Gastrocnemius medialis (tissue), 4 donors: ENCODE measurements at regions of chr15 and their contacts with region 1.

Region 1: GRCh38 chr15:92803847-92804609 is 96.1 kb upstream of the CHD2 start:
- DNase-seq: peak; percentile 80 to 89
- ATAC-seq: peak; percentile 86 to 89
- H3K4me3 ChIP-seq: no peak overlapping the region
- H3K27ac ChIP-seq: peak overlapping the region; percentile 97 to 99 (median 98)
- H3K4me1 ChIP-seq: peaks cover 40 to 45% of the 10 kb centered on the region in 2 donors
- H3K27me3 ChIP-seq: no peaks in the 10 kb centered on the region
- CTCF ChIP-seq: peak in 1 of 5 experiments; percentile 11
- POLR2A ChIP-seq: peak; percentile 37 to 66

Region 2: GRCh38 chr15:92917606-92918407 is 113.8 kb after region 1 on chr15:
- in situ Hi-C with region 1: loop called in 3 of 4 experiments (anchors 5 kb)
- intact Hi-C with region 1: loop called (anchors 1 kb)
- DNase-seq: peak; percentile 87 to 94
- ATAC-seq: peak; percentile 57 to 64
- H3K4me3 ChIP-seq: peak overlapping the region; percentile 3 to 21 (median 12)
- H3K27ac ChIP-seq: peak overlapping the region; percentile 91 to 97 (median 96)
- H3K4me1 ChIP-seq: peaks cover 86 to 91% of the 10 kb centered on the region in 2 donors
- H3K27me3 ChIP-seq: no peaks in the 10 kb centered on the region
- CTCF ChIP-seq: peak; percentile 88 to 98 (median 95)
- POLR2A ChIP-seq: no peak

Region 3: DNA sequence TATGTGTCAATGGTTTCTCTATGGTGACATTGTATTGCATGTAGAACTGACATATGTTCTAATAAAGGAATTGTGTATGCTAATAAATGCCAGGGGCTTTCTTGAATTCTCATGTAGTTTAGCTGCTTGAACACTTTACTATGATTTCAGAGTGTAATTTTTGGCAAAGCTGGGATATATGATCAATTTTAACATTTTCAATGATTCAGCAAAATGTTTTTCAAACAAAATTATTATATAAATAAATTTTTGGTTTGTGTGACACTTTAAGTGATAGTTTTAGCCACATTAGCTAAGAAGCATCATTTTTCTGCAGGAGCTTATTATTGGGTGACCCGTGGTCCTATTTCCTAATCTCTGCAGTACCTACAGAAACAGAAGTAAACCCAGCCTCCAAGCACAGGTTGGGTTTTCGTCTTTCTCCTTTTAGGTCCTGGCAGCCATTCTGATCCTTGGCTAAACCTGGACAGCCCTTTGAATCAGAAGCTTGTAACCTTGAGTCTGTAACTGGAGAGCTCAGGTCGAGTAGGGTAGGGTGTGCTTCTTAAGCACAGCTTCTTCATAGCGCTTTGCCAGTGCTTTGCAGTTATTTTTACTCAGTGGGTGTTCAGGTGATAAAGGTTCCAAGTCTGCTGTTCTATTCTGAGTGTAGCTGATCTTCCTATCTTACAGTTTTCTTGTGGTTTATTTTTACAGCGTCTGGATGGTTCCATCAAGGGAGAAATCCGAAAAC is 170.3 kb after region 1 on chr15:
- in situ Hi-C with region 1: no loop called
- intact Hi-C with region 1: loop called (anchors 1 kb)
- DNase-seq: peak; percentile 83 to 87
- ATAC-seq: peak; percentile 90 to 93
- H3K4me3 ChIP-seq: peak overlapping the region; percentile 33 to 44 (median 36)
- H3K27ac ChIP-seq: peak overlapping the region; percentile 78 to 92 (median 90)
- H3K4me1 ChIP-seq: peaks cover 47 to 61% of the 10 kb centered on the region in 2 donors
- H3K27me3 ChIP-seq: no peaks in the 10 kb centered on the region
- CTCF ChIP-seq: no peak
- POLR2A ChIP-seq: peak in 1 of 2 donors; percentile 44

Region 4: DNA sequence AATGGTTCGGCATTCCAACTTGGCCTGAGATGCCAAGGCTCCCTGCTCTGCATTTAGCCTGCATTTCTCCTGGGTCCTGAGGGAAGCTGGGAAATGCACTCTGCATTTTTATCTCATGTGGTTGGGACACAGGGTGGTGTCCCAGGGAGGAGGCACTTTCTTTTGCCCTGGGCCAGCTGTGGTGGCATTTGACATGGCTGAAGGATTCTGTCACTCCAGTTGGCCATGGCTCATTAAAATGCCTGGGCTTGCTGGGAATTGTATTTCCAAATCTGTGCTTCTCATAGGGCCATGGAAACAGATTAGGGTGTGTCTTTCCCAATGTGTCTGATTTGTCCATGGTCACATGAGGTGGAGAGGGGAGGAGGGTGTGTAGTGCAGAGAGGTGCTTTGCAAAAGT is 413.3 kb after region 1 on chr15:
- in situ Hi-C with region 1: no loop called
- intact Hi-C with region 1: loop called (anchors 5 kb)
- DNase-seq: peak; percentile 76 to 89
- ATAC-seq: peak; percentile 70 to 85
- H3K4me3 ChIP-seq: no peak overlapping the region
- H3K27ac ChIP-seq: peak overlapping the region; percentile 85 to 90 (median 87)
- H3K4me1 ChIP-seq: peaks cover 24 to 49% of the 10 kb centered on the region in 2 donors
- H3K27me3 ChIP-seq: no peaks in the 10 kb centered on the region
- CTCF ChIP-seq: peak in 1 of 5 experiments; percentile 11
- POLR2A ChIP-seq: no peak